A549 (cell line): ENCODE measurements at regions of chr17 and their contacts with region 1.

Region 1: DNA sequence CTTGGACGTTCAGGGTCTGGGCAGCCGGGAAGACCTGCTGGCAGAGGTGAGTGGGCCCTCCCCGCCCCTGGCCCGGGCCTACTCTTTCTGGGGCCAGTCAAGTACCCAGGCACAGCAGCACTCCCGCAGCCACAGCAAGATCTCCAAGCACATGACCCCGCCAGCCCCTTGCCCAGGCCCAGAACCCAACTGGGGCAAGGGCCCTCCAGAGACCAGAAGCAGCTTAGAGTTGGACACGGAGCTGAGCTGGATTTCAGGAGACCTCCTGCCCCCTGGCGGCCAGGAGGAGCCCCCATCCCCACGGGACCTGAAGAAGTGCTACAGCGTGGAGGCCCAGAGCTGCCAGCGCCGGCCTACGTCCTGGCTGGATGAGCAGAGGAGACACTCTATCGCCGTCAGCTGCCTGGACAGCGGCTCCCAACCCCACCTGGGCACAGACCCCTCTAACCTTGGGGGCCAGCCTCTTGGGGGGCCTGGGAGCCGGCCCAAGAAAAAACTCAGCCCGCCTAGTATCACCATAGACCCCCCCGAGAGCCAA is 8.6 kb upstream of the ABCC3 start:
- DNase-seq: peak; percentile 88
- ATAC-seq: peak; percentile 66 to 84
- H3K4me3 ChIP-seq: no peak overlapping the region
- H3K27ac ChIP-seq: peak overlapping the region; percentile 71 to 83
- H3K4me1 ChIP-seq: peaks cover 54% of the 10 kb centered on the region
- CTCF ChIP-seq: peak; percentile 76
- EP300 ChIP-seq: no peak
- POLR2A ChIP-seq: no peak
- RAD21 ChIP-seq: peak; percentile 82 to 88

Region 2: GRCh38 chr17:50575581-50576210 is 50.4 kb before region 1 on chr17:
- CTCF ChIA-PET with region 1: interaction called, 19 read pairs
- POLR2A ChIA-PET with region 1: no interaction called
- DNase-seq: no peak
- ATAC-seq: peak; percentile 36 to 62; a peak in 4 of 6 replicates
- H3K4me3 ChIP-seq: no peak overlapping the region
- H3K27ac ChIP-seq: no peak overlapping the region
- H3K4me1 ChIP-seq: no peaks in the 10 kb centered on the region
- CTCF ChIP-seq: no peak
- EP300 ChIP-seq: no peak
- POLR2A ChIP-seq: no peak
- RAD21 ChIP-seq: no peak

Region 3: GRCh38 chr17:50604513-50604912 is 21.6 kb before region 1 on chr17:
- CTCF ChIA-PET with region 1: interaction called, 35 read pairs
- POLR2A ChIA-PET with region 1: no interaction called
- DNase-seq: no peak
- ATAC-seq: peak in 1 of 2 experiments; percentile 19; a peak in 3 of 6 replicates
- H3K4me3 ChIP-seq: no peak overlapping the region
- H3K27ac ChIP-seq: no peak overlapping the region; a peak in 1 of 6 replicates
- H3K4me1 ChIP-seq: no peaks in the 10 kb centered on the region
- CTCF ChIP-seq: no peak
- EP300 ChIP-seq: no peak
- POLR2A ChIP-seq: no peak
- RAD21 ChIP-seq: no peak

Region 4: DNA sequence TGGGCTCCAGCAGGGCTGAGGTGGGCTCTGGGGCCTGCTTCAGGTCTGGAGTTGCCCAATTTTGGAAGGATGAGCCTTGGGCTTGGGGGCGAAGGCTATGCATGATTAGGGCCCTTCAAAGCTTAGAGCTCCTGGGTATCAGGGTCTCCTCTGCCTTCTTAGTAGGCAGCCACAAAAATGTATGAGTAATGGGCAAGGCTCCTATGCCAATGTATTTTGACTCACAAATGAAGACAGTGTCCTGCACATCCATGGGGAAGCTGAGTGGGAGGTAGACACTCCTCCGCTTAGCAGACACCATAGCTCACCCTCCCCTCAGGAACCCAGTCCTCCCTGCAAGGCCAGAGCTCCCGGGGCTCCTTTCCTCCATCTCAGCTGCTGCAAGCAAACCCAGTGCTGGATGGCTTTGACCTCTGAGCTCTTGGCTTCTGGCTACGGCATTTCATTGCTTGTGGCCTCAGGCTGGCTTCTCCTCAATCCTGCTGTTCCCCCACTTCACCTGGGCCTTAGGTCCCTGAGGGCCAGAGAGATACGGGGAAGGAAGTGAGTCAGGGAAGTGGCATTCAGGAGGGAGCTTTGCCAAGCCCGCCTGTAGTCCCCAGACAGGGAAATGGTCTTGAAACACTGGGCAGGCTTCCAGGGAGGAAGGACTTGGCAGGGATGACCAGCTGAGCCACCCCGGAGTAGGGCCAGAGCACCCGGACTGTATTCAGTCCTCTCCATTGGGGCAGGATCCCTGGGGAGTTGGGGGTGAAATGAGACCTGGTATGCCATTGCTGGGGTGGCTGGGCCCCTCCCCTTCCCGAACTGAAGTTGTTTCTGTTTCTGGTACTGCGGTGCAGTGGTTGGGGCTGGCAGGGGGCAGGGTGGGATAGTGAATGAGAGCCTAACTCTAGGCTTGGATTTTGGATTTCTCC is 13.0 kb after region 1 on chr17:
- CTCF ChIA-PET with region 1: interaction called, 176 read pairs
- POLR2A ChIA-PET with region 1: interaction called, 17 read pairs
- DNase-seq: peak; percentile 96 to 100
- ATAC-seq: peak; percentile 77 to 80
- H3K4me3 ChIP-seq: peak overlapping the region; percentile 92; the same call in 1 of the 3 replicates
- H3K27ac ChIP-seq: peak overlapping the region; percentile 99 to 100
- H3K4me1 ChIP-seq: peaks cover 78% of the 10 kb centered on the region
- CTCF ChIP-seq: no peak
- EP300 ChIP-seq: peak; percentile 85 to 95
- POLR2A ChIP-seq: no peak; the same call in 1 of the 2 replicates
- RAD21 ChIP-seq: peak; percentile 32 to 55

Region 5: GRCh38 chr17:50707289-50708049 is 81.4 kb after region 1 on chr17 and contains the start of gene ANKRD40:
- CTCF ChIA-PET with region 1: interaction called, 2,097 read pairs
- POLR2A ChIA-PET with region 1: no interaction called
- DNase-seq: peak; percentile 96
- ATAC-seq: peak; percentile 81 to 88
- H3K4me3 ChIP-seq: peak within 1 kb of the TSS; percentile 65
- H3K27ac ChIP-seq: peak within 1 kb of the TSS; percentile 96 to 98
- H3K4me1 ChIP-seq: peaks cover 38% of the 10 kb centered on the region
- CTCF ChIP-seq: no peak
- EP300 ChIP-seq: peak; percentile 17 to 36; a peak in 1 of 5 replicates
- POLR2A ChIP-seq: peak; percentile 50
- RAD21 ChIP-seq: no peak
- polyA plus RNA-seq, gene ANKRD40: 68.5 and 84.3 TPM in 2 replicates